CD4-positive, alpha-beta T cell (primary cell): ENCODE measurements at regions of chr11 and their contacts with region 1.

Region 1: GRCh38 chr11:65418711-65419459 is 3.7 kb upstream of the NEAT1 start:
- DNase-seq: peak in 12 of 14 experiments; percentile 56 to 94 (median 75)
- ATAC-seq: peak; percentile 2
- H3K4me3 ChIP-seq: peak overlapping the region; percentile 86
- H3K4me3 Mint-ChIP-seq: peak overlapping the region; percentile 92
- H3K27ac ChIP-seq: peak overlapping the region; percentile 99
- H3K27ac Mint-ChIP-seq: peak overlapping the region; percentile 96
- H3K4me1 ChIP-seq: peaks cover 74% of the 10 kb centered on the region
- H3K4me1 Mint-ChIP-seq: peaks cover 57% of the 10 kb centered on the region
- H3K27me3 ChIP-seq: no peaks in the 10 kb centered on the region
- H3K27me3 Mint-ChIP-seq: no peaks in the 10 kb centered on the region
- CTCF ChIP-seq: no peak

Region 2: GRCh38 chr11:65382033-65382807 is 36.7 kb before region 1 on chr11 and contains the start of gene SLC25A45:
- CTCF ChIA-PET with region 1: interaction called, 32 read pairs
- POLR2A ChIA-PET with region 1: interaction called, 225 read pairs
- intact Hi-C with region 1: loop called in 1 of 2 experiments (anchors 1 kb)
- DNase-seq: peak; percentile 84 to 96 (median 92)
- ATAC-seq: peak; percentile 83
- H3K4me3 ChIP-seq: peak within 1 kb of the TSS; percentile 76
- H3K4me3 Mint-ChIP-seq: peak within 1 kb of the TSS; percentile 86
- H3K27ac ChIP-seq: peak within 1 kb of the TSS; percentile 94 to 95
- H3K27ac Mint-ChIP-seq: peak within 1 kb of the TSS; percentile 98
- H3K4me1 ChIP-seq: peaks cover 74% of the 10 kb centered on the region
- H3K4me1 Mint-ChIP-seq: peaks cover 57% of the 10 kb centered on the region
- H3K27me3 ChIP-seq: no peaks in the 10 kb centered on the region
- H3K27me3 Mint-ChIP-seq: no peaks in the 10 kb centered on the region
- CTCF ChIP-seq: peak; percentile 81
- total RNA-seq, gene SLC25A45: 40.0 to 40.8 TPM

Region 3: GRCh38 chr11:65440831-65441499 is 22.1 kb after region 1 on chr11:
- CTCF ChIA-PET with region 1: no interaction called
- POLR2A ChIA-PET with region 1: interaction called, 23 read pairs
- intact Hi-C with region 1: no loop called
- DNase-seq: peak in 3 of 14 experiments; percentile 14 to 33 (median 29)
- ATAC-seq: peak; percentile 14
- H3K4me3 ChIP-seq: no peak overlapping the region
- H3K4me3 Mint-ChIP-seq: no peak overlapping the region
- H3K27ac ChIP-seq: no peak overlapping the region
- H3K27ac Mint-ChIP-seq: peak overlapping the region; percentile 74
- H3K4me1 ChIP-seq: peaks cover 55% of the 10 kb centered on the region
- H3K4me1 Mint-ChIP-seq: peaks cover 59% of the 10 kb centered on the region
- H3K27me3 ChIP-seq: no peaks in the 10 kb centered on the region
- H3K27me3 Mint-ChIP-seq: no peaks in the 10 kb centered on the region
- CTCF ChIP-seq: no peak

Region 4: DNA sequence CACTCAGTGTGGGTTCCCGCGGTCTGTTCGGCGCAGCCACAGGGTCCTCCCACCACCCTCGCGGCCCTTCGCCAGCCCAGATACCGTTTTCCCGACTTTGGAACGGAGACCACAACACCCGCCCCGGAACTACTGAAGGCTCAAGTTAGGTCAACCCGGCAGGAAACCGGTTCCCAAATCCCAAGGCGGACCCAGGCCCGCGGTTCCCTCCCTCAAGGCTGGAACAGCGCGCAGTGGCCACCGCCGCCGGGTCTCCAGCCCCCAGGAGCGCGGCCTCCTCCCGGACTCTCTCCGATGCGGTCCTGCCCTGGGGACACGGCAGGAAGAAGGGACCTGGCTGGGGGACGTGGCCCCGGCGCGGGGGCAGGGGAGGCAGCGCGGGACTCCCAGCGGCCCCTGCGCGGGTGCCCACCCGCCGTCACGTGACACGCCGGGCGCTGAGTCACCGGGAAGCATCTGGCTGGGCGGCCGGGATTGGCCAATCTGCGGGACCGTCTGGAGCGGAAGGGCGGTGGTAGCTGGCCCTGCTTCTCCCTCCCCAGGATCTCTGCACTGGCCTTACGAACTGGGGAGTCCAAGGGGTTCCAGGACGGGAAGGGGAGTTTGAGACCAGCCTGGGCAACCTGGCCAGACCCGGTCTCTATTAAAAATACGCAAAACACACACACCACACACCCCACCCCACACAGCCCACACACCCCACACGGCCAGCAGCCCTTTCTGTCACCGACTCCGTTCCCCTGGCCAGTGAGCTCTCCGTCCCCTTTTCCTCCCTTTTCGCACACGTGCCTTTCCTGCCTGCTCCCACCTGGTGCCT is 58.5 kb after region 1 on chr11:
- CTCF ChIA-PET with region 1: interaction called, 46 read pairs
- POLR2A ChIA-PET with region 1: interaction called, 110 read pairs
- intact Hi-C with region 1: no loop called
- DNase-seq: peak; percentile 69 to 94 (median 88)
- ATAC-seq: peak; percentile 84
- H3K4me3 ChIP-seq: peak overlapping the region; percentile 80
- H3K4me3 Mint-ChIP-seq: peak overlapping the region; percentile 100
- H3K27ac ChIP-seq: peak overlapping the region; percentile 94 to 99
- H3K27ac Mint-ChIP-seq: peak overlapping the region; percentile 99
- H3K4me1 ChIP-seq: peaks cover 34% of the 10 kb centered on the region
- H3K4me1 Mint-ChIP-seq: peaks cover 15% of the 10 kb centered on the region
- H3K27me3 ChIP-seq: no peaks in the 10 kb centered on the region
- H3K27me3 Mint-ChIP-seq: no peaks in the 10 kb centered on the region
- CTCF ChIP-seq: no peak

Region 5: DNA sequence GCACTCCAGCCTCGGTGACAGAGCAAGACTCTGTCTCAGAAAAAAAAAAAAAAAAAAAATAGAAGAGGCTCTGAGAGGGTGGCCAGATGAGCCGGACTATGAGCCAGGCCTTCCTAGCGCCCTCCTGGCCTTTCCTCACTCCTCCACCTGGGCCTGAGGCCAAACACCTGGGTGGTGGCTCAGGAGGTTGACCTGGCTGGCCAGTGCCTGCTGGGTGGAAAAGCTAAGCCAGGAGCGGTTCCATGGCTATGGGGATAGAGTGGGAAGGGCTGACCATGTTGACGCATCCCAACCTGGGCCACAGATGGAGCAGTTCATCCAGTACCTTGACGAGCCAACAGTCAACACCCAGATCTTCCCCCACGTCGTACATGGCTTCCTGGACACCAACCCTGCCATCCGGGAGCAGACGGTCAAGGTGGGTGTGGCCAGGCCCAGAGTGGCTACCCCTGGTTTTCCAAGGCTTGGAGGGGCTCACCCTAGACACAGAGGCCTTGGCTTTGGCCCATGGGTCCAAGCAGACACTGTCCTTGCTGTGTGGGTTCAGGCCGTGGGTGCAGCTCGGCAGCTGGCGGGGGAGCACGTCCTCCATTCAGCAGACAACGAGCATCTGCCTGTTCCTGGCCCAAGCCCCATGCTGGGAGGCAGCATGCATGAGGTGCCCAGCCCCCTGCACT is 113.6 kb after region 1 on chr11:
- CTCF ChIA-PET with region 1: no interaction called
- POLR2A ChIA-PET with region 1: no interaction called
- intact Hi-C with region 1: no loop called
- DNase-seq: no peak
- ATAC-seq: no peak
- H3K4me3 ChIP-seq: no peak overlapping the region
- H3K4me3 Mint-ChIP-seq: no peak overlapping the region
- H3K27ac ChIP-seq: no peak overlapping the region
- H3K27ac Mint-ChIP-seq: no peak overlapping the region
- H3K4me1 ChIP-seq: peaks cover 22% of the 10 kb centered on the region
- H3K4me1 Mint-ChIP-seq: peaks cover 14% of the 10 kb centered on the region
- H3K27me3 ChIP-seq: no peaks in the 10 kb centered on the region
- H3K27me3 Mint-ChIP-seq: no peaks in the 10 kb centered on the region
- CTCF ChIP-seq: no peak

Region 6: GRCh38 chr11:65810046-65810868 is 391.4 kb after region 1 on chr11:
- CTCF ChIA-PET with region 1: no interaction called
- POLR2A ChIA-PET with region 1: no interaction called
- intact Hi-C with region 1: no loop called
- DNase-seq: peak in 3 of 14 experiments; percentile 24 to 61 (median 51)
- ATAC-seq: peak; percentile 79
- H3K4me3 ChIP-seq: no peak overlapping the region
- H3K4me3 Mint-ChIP-seq: no peak overlapping the region
- H3K27ac ChIP-seq: no peak overlapping the region
- H3K27ac Mint-ChIP-seq: no peak overlapping the region
- H3K4me1 ChIP-seq: no peaks in the 10 kb centered on the region
- H3K4me1 Mint-ChIP-seq: no peaks in the 10 kb centered on the region
- H3K27me3 ChIP-seq: no peaks in the 10 kb centered on the region
- H3K27me3 Mint-ChIP-seq: peaks cover 5% of the 10 kb centered on the region
- CTCF ChIP-seq: no peak